ENCODE measurements at regions of chr3 and their contacts with region 1.

Region 1: DNA sequence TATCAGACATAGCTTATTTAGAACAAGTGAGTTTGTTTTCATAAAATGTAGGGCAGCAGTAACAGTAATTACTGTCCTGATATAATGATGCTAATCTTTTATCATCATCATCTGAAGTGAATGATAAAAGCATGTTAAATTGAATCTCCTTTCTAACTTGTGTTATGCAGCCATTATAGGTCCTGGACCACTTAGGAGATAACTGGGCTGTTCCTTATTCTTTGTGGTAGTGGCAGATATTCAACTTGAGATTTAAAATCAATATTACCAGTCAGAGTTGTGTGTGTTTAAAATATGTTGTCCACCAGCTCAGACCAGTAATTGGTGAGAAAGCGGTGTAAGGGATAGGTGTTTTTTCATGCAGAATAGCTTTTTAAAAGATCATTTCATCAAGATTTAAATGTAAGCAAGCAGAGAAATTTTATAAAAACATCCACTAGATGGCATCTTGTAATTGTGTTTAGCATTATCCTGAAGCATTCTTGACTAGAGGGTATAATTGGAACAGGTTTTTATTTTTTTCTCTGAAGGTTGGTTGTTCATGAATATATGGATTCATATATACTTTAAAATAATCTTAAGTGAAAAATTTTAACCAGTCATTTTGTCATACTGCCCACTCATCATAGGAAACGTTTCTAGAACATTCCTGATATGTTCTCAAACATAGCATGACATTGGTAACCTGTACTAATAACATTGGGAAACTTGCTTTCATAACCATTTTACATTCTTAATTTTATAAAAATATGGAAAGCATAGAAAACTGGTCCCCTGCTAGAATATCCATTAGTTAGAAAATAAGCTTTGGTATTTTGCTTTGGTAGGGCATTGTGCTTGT is 153.9 kb downstream of the BBX start:
- DNase-seq: no peak
- H3K4me3 Mint-ChIP-seq: no peak overlapping the region
- H3K27ac Mint-ChIP-seq: no peak overlapping the region
- H3K4me1 Mint-ChIP-seq: no peaks in the 10 kb centered on the region
- H3K27me3 Mint-ChIP-seq: no peaks in the 10 kb centered on the region

Region 2: DNA sequence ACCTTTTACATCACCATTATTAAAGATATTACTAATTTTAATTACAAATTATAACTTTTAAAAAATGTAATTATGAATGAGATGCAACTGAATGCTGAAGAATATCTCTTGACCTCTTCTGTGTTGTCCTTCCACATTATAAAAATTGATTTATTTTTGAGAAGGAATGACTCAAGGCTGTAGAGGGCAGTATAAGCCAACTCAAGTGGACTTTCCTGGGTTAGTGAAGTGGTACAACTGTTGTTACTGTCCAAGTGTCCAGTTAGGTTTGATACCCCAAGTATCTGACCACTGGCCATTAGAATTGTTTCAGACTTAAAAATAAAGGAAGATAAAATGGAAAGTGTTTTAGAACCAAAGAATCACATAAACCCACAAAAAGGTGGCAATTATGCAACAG is 102.0 kb before region 1 on chr3:
- CTCF ChIA-PET with region 1: interaction called, 18 read pairs
- DNase-seq: no peak
- H3K4me3 Mint-ChIP-seq: no peak overlapping the region
- H3K27ac Mint-ChIP-seq: no peak overlapping the region
- H3K4me1 Mint-ChIP-seq: peaks cover 5% of the 10 kb centered on the region
- H3K27me3 Mint-ChIP-seq: no peaks in the 10 kb centered on the region

Region 3: GRCh38 chr3:107660306-107660976 is 16.2 kb before region 1 on chr3:
- CTCF ChIA-PET with region 1: interaction called, 18 read pairs
- DNase-seq: no peak
- H3K4me3 Mint-ChIP-seq: no peak overlapping the region
- H3K27ac Mint-ChIP-seq: no peak overlapping the region
- H3K4me1 Mint-ChIP-seq: peaks cover 15% of the 10 kb centered on the region
- H3K27me3 Mint-ChIP-seq: no peaks in the 10 kb centered on the region

Region 4: DNA sequence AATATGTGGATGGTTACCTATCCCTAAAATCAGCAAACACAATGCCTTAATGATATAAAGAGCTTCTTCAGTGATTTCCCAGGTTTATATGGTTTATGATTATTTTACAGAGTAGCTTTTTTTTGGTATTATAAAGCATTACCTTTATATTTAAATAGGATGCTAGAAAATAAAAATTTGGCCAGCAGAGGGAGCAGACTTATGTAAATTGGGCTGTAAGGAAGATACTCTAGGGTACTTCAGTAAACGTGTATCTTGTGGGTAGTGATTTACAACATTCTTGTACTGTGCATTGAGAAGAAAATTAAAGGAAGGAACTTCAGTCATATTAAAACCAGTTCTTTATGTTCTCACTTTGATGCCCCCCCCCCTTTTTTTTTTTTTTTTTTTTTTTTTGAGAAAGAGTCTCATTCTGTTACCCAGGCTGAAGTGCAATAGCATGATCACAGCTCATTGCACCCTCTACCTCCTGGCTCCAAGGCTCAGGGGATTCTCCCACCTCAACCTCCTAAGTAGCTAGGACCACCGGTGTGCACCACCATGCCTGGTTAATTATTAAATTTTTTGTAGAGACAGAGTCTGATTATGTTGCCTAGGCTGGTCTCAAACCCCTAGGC is 13.9 kb after region 1 on chr3:
- CTCF ChIA-PET with region 1: interaction called, 45 read pairs
- DNase-seq: no peak
- H3K4me3 Mint-ChIP-seq: no peak overlapping the region
- H3K27ac Mint-ChIP-seq: no peak overlapping the region
- H3K4me1 Mint-ChIP-seq: peaks cover 2% of the 10 kb centered on the region
- H3K27me3 Mint-ChIP-seq: no peaks in the 10 kb centered on the region

Region 5: GRCh38 chr3:107740992-107741896 is 64.6 kb after region 1 on chr3:
- CTCF ChIA-PET with region 1: interaction called, 43 read pairs
- DNase-seq: no peak
- H3K4me3 Mint-ChIP-seq: no peak overlapping the region
- H3K27ac Mint-ChIP-seq: no peak overlapping the region
- H3K4me1 Mint-ChIP-seq: no peaks in the 10 kb centered on the region
- H3K27me3 Mint-ChIP-seq: no peaks in the 10 kb centered on the region

Region 6: GRCh38 chr3:107752202-107752990 is 75.7 kb after region 1 on chr3:
- CTCF ChIA-PET with region 1: interaction called, 16 read pairs
- DNase-seq: no peak
- H3K4me3 Mint-ChIP-seq: no peak overlapping the region
- H3K27ac Mint-ChIP-seq: no peak overlapping the region
- H3K4me1 Mint-ChIP-seq: no peaks in the 10 kb centered on the region
- H3K27me3 Mint-ChIP-seq: no peaks in the 10 kb centered on the region

Region 7: DNA sequence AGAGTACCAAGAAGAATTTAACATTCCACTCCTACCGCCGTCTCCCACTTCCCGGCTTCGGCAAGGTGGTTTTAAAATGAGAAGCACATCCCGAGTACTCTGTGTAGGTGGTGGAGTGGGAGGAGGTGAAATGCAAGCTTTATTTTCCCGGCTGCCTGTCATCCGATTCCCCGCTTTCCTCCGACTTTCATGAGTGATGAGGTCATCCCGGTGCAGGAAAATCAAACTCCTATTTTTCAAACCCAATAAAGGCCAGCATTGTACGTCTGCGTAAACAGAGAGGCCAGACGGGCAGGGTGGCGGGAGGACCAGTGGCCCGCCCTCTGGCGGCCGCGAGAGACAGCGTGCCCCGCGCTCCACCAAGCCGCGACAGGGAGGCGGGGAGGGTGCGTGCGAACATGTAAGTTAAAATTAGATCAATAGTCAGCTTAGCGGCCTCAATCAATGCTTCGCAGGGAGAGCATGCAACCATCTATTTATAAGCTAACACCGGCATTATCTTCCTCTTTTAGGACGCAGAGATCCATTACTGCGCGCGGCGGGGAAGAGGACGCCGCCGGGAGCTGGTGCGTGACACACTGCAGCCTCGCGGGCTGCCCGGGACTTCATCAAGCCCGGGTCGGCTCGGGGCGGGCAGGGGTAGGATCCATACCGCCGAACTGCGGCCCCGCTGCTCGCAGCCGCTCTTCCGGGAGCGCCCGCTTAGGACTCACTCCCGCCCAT is 250.8 kb after region 1 on chr3:
- CTCF ChIA-PET with region 1: interaction called, 10 read pairs
- DNase-seq: peak; percentile 72
- H3K4me3 Mint-ChIP-seq: peak overlapping the region; percentile 74
- H3K27ac Mint-ChIP-seq: no peak overlapping the region
- H3K4me1 Mint-ChIP-seq: peaks cover 12% of the 10 kb centered on the region
- H3K27me3 Mint-ChIP-seq: peaks cover 33% of the 10 kb centered on the region

Measured in activated naive CD4-positive, alpha-beta T cell treated with anti-CD3 and anti-CD28 coated beads, Interleukin-2, amount 10 ng/mL, durations not matched to agents 7 days and 5 days (primary cell).